Activated CD4-positive, alpha-beta memory T cell treated with anti-CD3 and anti-CD28 coated beads for 36 hours (primary cell): ENCODE measurements at regions of chr2 and their contacts with region 1.

Region 1: GRCh38 chr2:102872388-102872787 is 110.6 kb downstream of the TMEM182 start:
- DNase-seq: no peak
- H3K4me3 Mint-ChIP-seq: no peak overlapping the region
- H3K27ac Mint-ChIP-seq: no peak overlapping the region
- H3K4me1 Mint-ChIP-seq: no peaks in the 10 kb centered on the region
- H3K27me3 Mint-ChIP-seq: no peaks in the 10 kb centered on the region

Region 2: GRCh38 chr2:102841107-102841840 is 31.1 kb before region 1 on chr2:
- CTCF ChIA-PET with region 1: interaction called, 10 read pairs
- POLR2A ChIA-PET with region 1: no interaction called
- intact Hi-C with region 1: no loop called
- DNase-seq: peak; percentile 23
- H3K4me3 Mint-ChIP-seq: no peak overlapping the region
- H3K27ac Mint-ChIP-seq: no peak overlapping the region
- H3K4me1 Mint-ChIP-seq: no peaks in the 10 kb centered on the region
- H3K27me3 Mint-ChIP-seq: peaks cover 2% of the 10 kb centered on the region

Region 3: GRCh38 chr2:102950371-102950946 is 78.1 kb after region 1 on chr2:
- CTCF ChIA-PET with region 1: no interaction called
- POLR2A ChIA-PET with region 1: no interaction called
- intact Hi-C with region 1: no loop called
- DNase-seq: no peak
- H3K4me3 Mint-ChIP-seq: no peak overlapping the region
- H3K27ac Mint-ChIP-seq: no peak overlapping the region
- H3K4me1 Mint-ChIP-seq: no peaks in the 10 kb centered on the region
- H3K27me3 Mint-ChIP-seq: no peaks in the 10 kb centered on the region